ENCODE measurements at regions of chrX and their contacts with region 1.

Region 1: GRCh38 chrX:100447654-100448397 is 37.8 kb upstream of the PCDH19 start:
- DNase-seq: peak; percentile 12 to 52 (median 32)
- ATAC-seq: peak in 2 of 4 donors; percentile 60 to 65
- H3K4me3 ChIP-seq: peak overlapping the region in 5 of 12 donors; percentile 10 to 49 (median 36)
- H3K27ac ChIP-seq: no peak overlapping the region
- H3K4me1 ChIP-seq: peaks cover 0 to 9% (median 0%) of the 10 kb centered on the region in 12 donors
- H3K27me3 ChIP-seq: peaks cover 0 to 22% (median 0%) of the 10 kb centered on the region in 9 donors
- CTCF ChIP-seq: peak; percentile 62 to 87 (median 74)
- POLR2A ChIP-seq: no peak

Region 2: GRCh38 chrX:100609591-100609990 is 161.8 kb after region 1 on chrX:
- intact Hi-C with region 1: loop called in 1 of 10 experiments (anchors 5 kb)
- DNase-seq: no peak
- ATAC-seq: no peak
- H3K4me3 ChIP-seq: no peak overlapping the region
- H3K27ac ChIP-seq: no peak overlapping the region
- H3K4me1 ChIP-seq: no peaks in the 10 kb centered on the region
- H3K27me3 ChIP-seq: peaks cover 0 to 59% (median 0%) of the 10 kb centered on the region in 9 donors
- CTCF ChIP-seq: peak in 6 of 12 donors; percentile 5 to 41 (median 24)
- POLR2A ChIP-seq: no peak

Region 3: GRCh38 chrX:100636321-100636991 is 188.6 kb after region 1 on chrX and contains the start of gene TSPAN6:
- intact Hi-C with region 1: loop called in 1 of 10 experiments (anchors 5 kb)
- DNase-seq: peak; percentile 71 to 85 (median 77)
- ATAC-seq: peak; percentile 97 to 99 (median 98)
- H3K4me3 ChIP-seq: peak within 1 kb of the TSS; percentile 46 to 82 (median 63)
- H3K27ac ChIP-seq: peak within 1 kb of the TSS in 9 of 12 donors; percentile 39 to 74 (median 62)
- H3K4me1 ChIP-seq: peaks cover 0 to 4% (median 0%) of the 10 kb centered on the region in 12 donors
- H3K27me3 ChIP-seq: peaks cover 0 to 45% (median 0%) of the 10 kb centered on the region in 9 donors
- CTCF ChIP-seq: peak; percentile 16 to 64 (median 48)
- POLR2A ChIP-seq: no peak
- total RNA-seq, gene TSPAN6: 3.2 to 9.0 (median 6.0) TPM

Measured in heart left ventricle (tissue), 16 donors.